Cardiac septum (tissue), 1 donor: ENCODE measurements at regions of chr7 and their contacts with region 1.

Region 1: DNA sequence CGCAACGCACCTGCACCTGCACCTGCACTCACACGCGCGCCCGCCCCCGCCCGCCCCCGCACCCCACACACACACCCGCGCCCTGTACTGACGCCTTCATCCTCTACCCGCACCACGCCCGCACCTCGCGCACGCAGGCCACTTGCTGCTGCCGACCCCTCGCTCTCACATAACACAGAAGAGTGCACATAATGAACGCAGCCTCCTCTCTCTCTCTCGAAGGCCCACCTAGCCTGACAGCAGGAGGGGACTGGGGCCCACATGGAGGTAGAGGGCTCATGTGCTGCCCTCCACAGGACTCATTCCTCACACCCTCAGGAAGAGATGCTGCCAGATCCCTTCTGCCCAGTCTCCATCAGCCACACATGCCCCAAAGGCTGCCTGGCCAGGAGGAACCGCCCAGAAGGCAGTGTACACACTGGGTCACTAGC is 432 bp upstream of the CAMK2B start:
- DNase-seq: peak; percentile 76

Region 2: GRCh38 chr7:44131173-44132029 is 194.4 kb before region 1 on chr7:
- intact Hi-C with region 1: loop called (anchors 10 kb)
- DNase-seq: no peak

Region 3: DNA sequence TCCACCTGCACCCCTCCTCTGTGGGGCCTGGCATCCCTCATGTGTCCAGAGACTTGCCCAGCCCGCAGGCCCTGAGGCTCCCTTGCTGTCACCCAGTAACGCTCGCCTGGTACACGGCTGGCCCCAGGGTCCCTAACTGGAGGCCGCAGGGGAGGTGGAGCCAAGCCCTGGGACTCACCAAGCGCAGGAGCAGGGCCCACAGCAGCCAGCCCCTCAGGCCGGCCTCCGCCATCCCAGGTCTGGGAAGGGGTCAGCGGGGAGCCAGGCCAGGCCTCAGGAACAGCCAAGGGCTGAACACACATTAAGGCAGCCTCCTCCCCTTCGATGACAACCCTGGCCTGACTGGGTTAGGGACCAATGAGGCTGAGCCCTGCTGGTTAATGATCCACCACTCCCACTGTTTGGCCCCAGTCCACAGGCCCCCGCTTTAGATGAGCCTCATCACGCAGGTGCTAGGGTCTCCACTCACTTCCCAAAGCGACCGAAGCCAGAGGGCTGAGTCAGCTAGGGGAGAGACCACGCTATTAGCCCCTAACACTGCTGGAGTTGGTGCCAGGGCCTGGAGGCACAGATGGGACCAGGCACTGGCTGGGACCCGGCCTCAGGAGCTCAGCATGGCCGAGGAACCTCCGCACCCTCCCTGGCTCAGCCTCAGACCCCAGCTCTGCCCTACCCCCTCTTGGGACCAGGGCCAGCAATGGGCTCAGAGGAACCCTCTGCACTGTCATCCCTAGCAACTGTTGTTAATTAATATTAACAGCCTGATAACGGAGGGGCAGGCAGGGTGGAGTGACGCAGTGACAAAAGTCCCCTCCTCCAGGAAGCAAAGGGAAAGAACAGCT is 215.4 kb after region 1 on chr7 and contains the start of gene NPC1L1:
- intact Hi-C with region 1: no loop called
- DNase-seq: no peak
- total RNA-seq, gene NPC1L1: 0.19 TPM